ENCODE measurements at regions of chr11 and their contacts with region 1.

Region 1: GRCh38 chr11:123580557-123581275 is 73.7 kb downstream of the SCN3B start:
- DNase-seq: peak; percentile 67 to 87
- H3K4me3 ChIP-seq: peak overlapping the region in 1 of 4 experiments; percentile 31; a peak in 1 of 8 replicates
- H3K27ac ChIP-seq: no peak overlapping the region
- H3K4me1 ChIP-seq: peaks cover 0 to 10% (median 2%) of the 10 kb centered on the region in 4 experiments; a peak in 5 of 7 replicates
- H3K27me3 ChIP-seq: no peaks in the 10 kb centered on the region; a peak in 1 of 7 replicates
- CTCF ChIP-seq: peak; percentile 98 to 99 (median 98)
- EP300 ChIP-seq: peak in 1 of 2 experiments; percentile 27; a peak in 1 of 3 replicates
- POLR2A ChIP-seq: no peak
- RAD21 ChIP-seq: peak; percentile 74 to 80

Region 2: DNA sequence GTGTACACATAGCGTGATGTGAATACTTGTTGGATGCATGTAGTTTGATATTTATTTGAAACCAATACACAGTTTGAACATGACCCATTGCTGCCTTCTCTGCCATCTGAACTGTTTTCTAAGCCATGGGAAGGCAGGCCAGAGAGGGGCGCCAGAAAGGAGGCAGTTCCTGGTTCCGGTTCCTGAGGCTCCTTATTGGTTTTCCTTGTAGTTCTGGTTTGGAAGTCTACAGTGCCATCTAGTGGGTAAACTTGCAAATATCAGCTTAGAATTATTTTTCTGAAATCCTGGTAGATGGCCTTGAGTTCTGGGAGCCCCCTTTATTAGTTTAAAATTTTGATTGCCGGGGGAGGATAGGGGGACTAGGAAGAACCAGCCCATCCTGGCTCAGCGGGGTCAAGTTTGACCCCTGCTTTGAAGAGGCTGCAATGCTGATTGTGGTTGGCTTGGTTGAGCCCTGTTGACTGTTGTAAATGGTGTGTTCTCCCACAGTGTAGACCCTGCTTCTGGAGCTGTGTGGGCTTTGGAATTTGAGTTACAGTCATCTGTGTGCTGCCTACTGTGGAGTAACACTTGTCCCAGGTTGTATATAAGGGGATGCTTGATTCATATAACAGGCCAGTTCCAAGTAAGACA is 102.2 kb before region 1 on chr11:
- CTCF ChIA-PET with region 1: interaction called, 12 read pairs
- POLR2A ChIA-PET with region 1: no interaction called
- DNase-seq: peak in 1 of 2 experiments; percentile 62
- H3K4me3 ChIP-seq: no peak overlapping the region
- H3K27ac ChIP-seq: no peak overlapping the region
- H3K4me1 ChIP-seq: peaks cover 2 to 15% (median 8%) of the 10 kb centered on the region in 4 experiments; a peak in 6 of 7 replicates
- H3K27me3 ChIP-seq: no peaks in the 10 kb centered on the region; a peak in 1 of 7 replicates
- CTCF ChIP-seq: peak; percentile 48 to 97 (median 76)
- EP300 ChIP-seq: no peak
- POLR2A ChIP-seq: no peak
- RAD21 ChIP-seq: peak; percentile 89 to 96

Region 3: DNA sequence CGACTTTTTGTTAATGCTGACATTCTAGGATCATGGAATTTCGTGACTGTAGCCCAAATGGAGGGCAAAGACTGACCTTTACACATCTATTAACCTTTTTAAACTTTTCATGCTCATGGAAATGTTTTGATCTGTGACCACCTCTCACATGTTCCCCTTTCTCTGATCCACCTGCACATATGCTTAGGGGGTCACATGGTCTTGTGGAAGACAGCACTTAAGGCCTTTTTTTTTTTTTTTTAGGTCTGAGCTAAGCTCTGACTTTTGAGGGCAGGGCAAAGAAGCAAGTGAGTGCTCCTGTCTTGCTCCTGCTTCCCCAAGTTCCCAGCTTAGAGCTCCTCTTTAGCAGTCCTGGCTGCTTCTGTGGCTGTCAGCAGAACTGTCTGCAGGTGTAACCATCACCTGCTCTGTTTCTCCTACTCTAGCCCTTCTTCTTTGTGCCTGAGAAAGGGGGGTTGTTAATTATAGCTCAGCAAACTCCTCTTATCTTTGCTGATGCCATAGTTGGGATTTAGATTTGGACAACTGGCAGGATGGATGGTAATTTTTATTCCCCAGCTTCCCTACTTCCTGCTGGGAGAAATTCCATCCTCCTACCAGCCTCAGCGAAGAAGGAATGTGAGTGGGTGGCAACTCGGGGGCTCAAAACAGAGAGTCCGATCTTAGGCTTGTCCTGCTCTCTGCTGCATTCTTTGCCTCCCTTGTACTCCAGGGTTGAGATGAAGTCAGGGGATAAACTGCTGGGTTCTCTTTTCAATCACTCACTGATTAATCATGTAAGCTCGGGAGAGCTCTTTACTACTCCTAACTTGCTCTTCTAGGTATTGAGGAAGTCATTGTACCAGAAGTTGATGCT is 86.3 kb before region 1 on chr11:
- CTCF ChIA-PET with region 1: interaction called, 16 read pairs
- POLR2A ChIA-PET with region 1: no interaction called
- DNase-seq: no peak
- H3K4me3 ChIP-seq: peak overlapping the region in 1 of 4 experiments; percentile 4; a peak in 2 of 8 replicates
- H3K27ac ChIP-seq: no peak overlapping the region
- H3K4me1 ChIP-seq: peaks cover 7 to 24% (median 16%) of the 10 kb centered on the region in 4 experiments
- H3K27me3 ChIP-seq: no peaks in the 10 kb centered on the region
- CTCF ChIP-seq: no peak
- EP300 ChIP-seq: 0 out of 3 replicates have a peak, but pooled peaks of 1 of the 2 experiments have one; percentile 41
- POLR2A ChIP-seq: no peak
- RAD21 ChIP-seq: no peak

Region 4: GRCh38 chr11:123511037-123511870 is 69.5 kb before region 1 on chr11:
- CTCF ChIA-PET with region 1: interaction called, 67 read pairs
- POLR2A ChIA-PET with region 1: interaction called, 4 read pairs
- DNase-seq: peak; percentile 80 to 92
- H3K4me3 ChIP-seq: no peak overlapping the region
- H3K27ac ChIP-seq: no peak overlapping the region
- H3K4me1 ChIP-seq: peaks cover 3 to 16% (median 10%) of the 10 kb centered on the region in 4 experiments
- H3K27me3 ChIP-seq: no peaks in the 10 kb centered on the region
- CTCF ChIP-seq: peak; percentile 80 to 89 (median 84)
- EP300 ChIP-seq: no peak
- POLR2A ChIP-seq: no peak
- RAD21 ChIP-seq: peak; percentile 83 to 86

Region 5: GRCh38 chr11:123536690-123537437 is 43.9 kb before region 1 on chr11:
- CTCF ChIA-PET with region 1: interaction called, 21 read pairs
- POLR2A ChIA-PET with region 1: no interaction called
- DNase-seq: peak in 1 of 2 experiments; percentile 47
- H3K4me3 ChIP-seq: peak overlapping the region in 1 of 4 experiments; percentile 26; a peak in 1 of 8 replicates
- H3K27ac ChIP-seq: peak overlapping the region; percentile 68; the same call in 1 of the 2 replicates
- H3K4me1 ChIP-seq: peaks cover 8 to 21% (median 16%) of the 10 kb centered on the region in 4 experiments; a peak in 5 of 7 replicates
- H3K27me3 ChIP-seq: no peaks in the 10 kb centered on the region
- CTCF ChIP-seq: no peak
- EP300 ChIP-seq: no peak
- POLR2A ChIP-seq: no peak
- RAD21 ChIP-seq: no peak

Region 6: DNA sequence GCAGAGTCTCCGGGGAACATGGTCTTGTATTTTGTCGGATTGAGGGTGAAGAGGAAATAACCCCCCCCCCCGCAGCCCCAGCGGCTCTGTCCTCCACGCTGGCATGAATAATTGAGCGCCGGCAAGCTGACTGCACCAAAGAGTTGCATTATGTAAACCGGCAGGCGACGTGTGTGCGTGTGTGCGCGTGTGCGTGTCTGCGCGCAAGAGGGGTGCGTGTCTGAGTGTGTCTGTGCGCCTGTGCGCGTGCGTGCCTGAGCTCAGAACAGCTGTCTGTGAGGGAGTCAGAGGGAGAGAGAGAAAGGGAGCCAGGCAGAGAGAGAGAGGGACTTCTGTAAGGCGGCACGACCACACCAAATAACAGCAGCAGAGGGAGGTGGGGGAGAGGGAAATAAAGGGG is 20.7 kb before region 1 on chr11:
- CTCF ChIA-PET with region 1: interaction called, 114 read pairs
- POLR2A ChIA-PET with region 1: interaction called, 5 read pairs
- DNase-seq: no peak
- H3K4me3 ChIP-seq: peak overlapping the region in 2 of 4 experiments; percentile 9 to 34; a peak in 2 of 8 replicates
- H3K27ac ChIP-seq: no peak overlapping the region
- H3K4me1 ChIP-seq: peaks cover 8 to 22% (median 16%) of the 10 kb centered on the region in 4 experiments
- H3K27me3 ChIP-seq: no peaks in the 10 kb centered on the region
- CTCF ChIP-seq: no peak
- EP300 ChIP-seq: no peak
- POLR2A ChIP-seq: no peak
- RAD21 ChIP-seq: no peak

Region 7: GRCh38 chr11:123640677-123641494 is 60.2 kb after region 1 on chr11:
- CTCF ChIA-PET with region 1: interaction called, 15 read pairs
- POLR2A ChIA-PET with region 1: no interaction called
- DNase-seq: peak in 1 of 2 experiments; percentile 86
- H3K4me3 ChIP-seq: no peak overlapping the region
- H3K27ac ChIP-seq: no peak overlapping the region
- H3K4me1 ChIP-seq: peaks cover 0 to 4% (median 3%) of the 10 kb centered on the region in 4 experiments; a peak in 5 of 7 replicates
- H3K27me3 ChIP-seq: 0 out of 7 replicates have a peak, but pooled peaks cover 0 to 2% (median 0%) of the 10 kb centered on the region in 4 experiments
- CTCF ChIP-seq: peak; percentile 85 to 92 (median 86)
- EP300 ChIP-seq: no peak
- POLR2A ChIP-seq: no peak
- RAD21 ChIP-seq: peak; percentile 94 to 95

Region 8: GRCh38 chr11:123682696-123683410 is 102.1 kb after region 1 on chr11:
- CTCF ChIA-PET with region 1: no interaction called
- POLR2A ChIA-PET with region 1: no interaction called
- DNase-seq: no peak
- H3K4me3 ChIP-seq: no peak overlapping the region
- H3K27ac ChIP-seq: no peak overlapping the region
- H3K4me1 ChIP-seq: no peaks in the 10 kb centered on the region
- H3K27me3 ChIP-seq: 0 out of 7 replicates have a peak, but pooled peaks cover 0 to 2% (median 0%) of the 10 kb centered on the region in 4 experiments
- CTCF ChIP-seq: no peak
- EP300 ChIP-seq: no peak
- POLR2A ChIP-seq: no peak
- RAD21 ChIP-seq: no peak

Measured in H1 (cell line).